ENCODE measurements at regions of chr2 and their contacts with region 1.

Region 1: GRCh38 chr2:224778474-224778877 is 62.3 kb upstream of the CCDC195 start:
- DNase-seq: peak; percentile 22 to 60
- H3K4me3 ChIP-seq: no peak overlapping the region
- H3K4me1 ChIP-seq: peaks cover 3% of the 10 kb centered on the region; the same call in 1 of the 2 replicates
- H3K27me3 ChIP-seq: no peaks in the 10 kb centered on the region

Region 2: DNA sequence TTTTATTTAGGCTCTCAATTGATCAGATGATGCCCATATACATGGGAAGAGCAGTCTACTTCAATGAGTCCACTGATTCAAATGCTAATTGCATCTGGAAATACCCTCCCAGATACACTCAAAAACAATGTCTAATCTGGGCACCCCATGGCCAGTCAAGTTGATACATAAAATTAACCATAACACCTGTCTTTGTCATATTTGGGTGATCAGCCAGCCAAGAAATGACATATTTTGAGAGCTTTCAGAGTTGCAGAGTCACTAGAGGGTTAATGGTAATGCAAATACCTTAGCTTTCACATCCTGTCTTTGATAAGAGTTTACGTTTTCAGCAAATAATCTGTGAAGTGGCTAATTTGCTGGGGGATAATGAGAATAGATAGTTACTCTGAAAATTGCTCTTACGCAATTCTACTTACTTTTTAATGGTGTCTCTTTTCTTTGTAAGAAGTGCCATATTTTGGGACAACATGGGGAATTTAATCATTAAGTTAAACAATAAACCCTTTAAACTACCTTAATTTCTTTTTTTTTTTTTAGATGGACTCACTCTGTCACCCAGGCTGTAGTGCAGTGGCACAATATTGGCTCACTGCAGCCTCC is 111.4 kb before region 1 on chr2:
- in situ Hi-C with region 1: loop called (anchors 10 kb)
- DNase-seq: no peak
- H3K4me3 ChIP-seq: no peak overlapping the region
- H3K4me1 ChIP-seq: peaks cover 16% of the 10 kb centered on the region
- H3K27me3 ChIP-seq: no peaks in the 10 kb centered on the region

Region 3: GRCh38 chr2:225112362-225113126 is 334.1 kb after region 1 on chr2:
- in situ Hi-C with region 1: no loop called
- DNase-seq: no peak
- H3K4me3 ChIP-seq: no peak overlapping the region
- H3K4me1 ChIP-seq: no peaks in the 10 kb centered on the region
- H3K27me3 ChIP-seq: no peaks in the 10 kb centered on the region

Measured in HAP-1 (cell line).